Activated CD8-positive, alpha-beta T cell treated with anti-CD3 and anti-CD28 coated beads, Interleukin-2, amount 10 ng/mL, durations not matched to agents 7 days and 5 days (primary cell): ENCODE measurements at regions of chr6 and their contacts with region 1.

Region 1: GRCh38 chr6:35522660-35523658 is 10.3 kb upstream of the TULP1 start:
- DNase-seq: peak; percentile 83
- ATAC-seq: peak; percentile 95
- H3K4me3 Mint-ChIP-seq: peak overlapping the region; percentile 53
- H3K27ac Mint-ChIP-seq: peak overlapping the region; percentile 87
- H3K4me1 Mint-ChIP-seq: peaks cover 33% of the 10 kb centered on the region
- H3K27me3 Mint-ChIP-seq: peaks cover 6% of the 10 kb centered on the region

Region 2: GRCh38 chr6:35461244-35461643 is 61.7 kb before region 1 on chr6:
- CTCF ChIA-PET with region 1: no interaction called
- POLR2A ChIA-PET with region 1: no interaction called
- DNase-seq: no peak
- ATAC-seq: no peak
- H3K4me3 Mint-ChIP-seq: no peak overlapping the region
- H3K27ac Mint-ChIP-seq: no peak overlapping the region
- H3K4me1 Mint-ChIP-seq: peaks cover 3% of the 10 kb centered on the region
- H3K27me3 Mint-ChIP-seq: no peaks in the 10 kb centered on the region

Region 3: DNA sequence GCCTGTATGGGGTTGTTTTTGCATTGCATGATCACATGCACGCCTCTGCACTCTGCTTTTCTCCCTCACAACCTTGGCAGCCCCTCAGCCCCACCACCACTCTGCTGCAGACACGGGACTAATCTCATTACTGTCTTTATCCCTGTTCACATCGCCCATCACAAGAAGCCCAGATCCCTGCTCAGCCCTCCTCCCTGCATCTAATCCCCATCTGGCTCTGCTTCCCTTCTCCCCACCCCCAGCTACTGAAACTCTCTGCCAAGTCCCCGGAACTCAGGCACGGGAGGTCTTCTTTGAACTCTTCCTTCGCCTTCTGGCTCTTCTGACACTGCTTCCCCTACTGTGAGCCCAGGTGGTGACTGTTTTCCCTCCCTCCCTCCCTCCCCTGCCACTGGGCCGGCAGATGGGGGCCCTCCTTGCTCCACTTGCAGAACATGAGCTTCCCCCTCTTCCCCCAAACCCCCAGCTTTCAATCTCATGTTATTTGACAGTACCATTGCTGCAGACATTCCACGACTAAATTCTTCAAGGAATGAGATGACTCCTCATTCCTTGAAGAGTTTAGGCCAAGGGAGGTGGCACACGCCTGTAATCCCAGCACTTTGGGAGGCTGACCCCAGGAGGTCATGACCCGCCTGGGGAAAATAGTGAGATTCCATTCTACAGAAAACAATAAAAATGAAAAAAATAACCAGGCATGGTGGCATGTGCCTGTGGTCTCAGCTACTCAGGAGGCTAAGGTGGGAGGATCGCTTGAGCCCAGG is 11.6 kb after region 1 on chr6:
- CTCF ChIA-PET with region 1: interaction called, 19 read pairs
- POLR2A ChIA-PET with region 1: interaction called, 3 read pairs
- DNase-seq: no peak
- ATAC-seq: no peak
- H3K4me3 Mint-ChIP-seq: no peak overlapping the region
- H3K27ac Mint-ChIP-seq: no peak overlapping the region
- H3K4me1 Mint-ChIP-seq: peaks cover 10% of the 10 kb centered on the region
- H3K27me3 Mint-ChIP-seq: peaks cover 16% of the 10 kb centered on the region

Region 4: DNA sequence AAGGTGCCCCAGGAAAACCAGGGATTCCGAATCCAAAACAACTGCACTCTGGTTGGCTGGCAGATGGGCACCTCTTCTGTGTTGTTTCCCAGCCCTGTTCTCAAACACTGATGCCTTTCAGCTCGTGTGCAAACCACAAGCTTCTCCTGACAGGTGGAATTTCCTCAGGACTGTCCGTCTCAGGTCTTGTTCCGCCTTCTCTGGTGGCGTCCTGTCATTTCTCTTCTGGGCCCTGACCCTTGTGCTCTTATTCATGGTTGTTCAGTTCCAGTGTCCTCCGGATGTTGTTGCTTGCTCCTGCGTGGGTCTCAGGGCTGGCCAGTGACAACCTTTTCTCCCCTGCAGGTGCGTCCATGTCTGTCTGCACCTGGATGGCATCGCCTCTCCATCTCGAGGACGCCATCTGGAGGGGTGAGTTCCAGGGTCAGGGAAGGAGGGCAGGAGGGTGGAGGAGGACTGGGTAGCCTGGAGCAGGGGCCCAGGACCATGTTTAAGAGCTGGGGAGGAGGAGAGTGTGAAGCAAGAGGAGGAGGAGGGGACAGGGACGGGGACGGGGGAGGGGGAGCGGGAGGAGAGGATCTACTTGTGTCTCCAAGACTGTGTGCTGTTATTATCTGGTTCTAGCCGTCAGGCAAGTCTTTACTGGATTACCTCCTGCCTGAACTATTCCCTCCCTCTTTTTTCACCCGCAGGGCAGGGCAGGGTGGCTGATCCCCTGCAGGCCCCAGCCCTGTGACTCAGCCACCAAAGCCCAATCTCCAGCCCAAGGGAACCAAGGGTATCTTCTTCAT is 21.8 kb after region 1 on chr6:
- CTCF ChIA-PET with region 1: interaction called, 17 read pairs
- POLR2A ChIA-PET with region 1: no interaction called
- DNase-seq: no peak
- ATAC-seq: no peak
- H3K4me3 Mint-ChIP-seq: no peak overlapping the region
- H3K27ac Mint-ChIP-seq: no peak overlapping the region
- H3K4me1 Mint-ChIP-seq: peaks cover 4% of the 10 kb centered on the region
- H3K27me3 Mint-ChIP-seq: peaks cover 12% of the 10 kb centered on the region

Region 5: DNA sequence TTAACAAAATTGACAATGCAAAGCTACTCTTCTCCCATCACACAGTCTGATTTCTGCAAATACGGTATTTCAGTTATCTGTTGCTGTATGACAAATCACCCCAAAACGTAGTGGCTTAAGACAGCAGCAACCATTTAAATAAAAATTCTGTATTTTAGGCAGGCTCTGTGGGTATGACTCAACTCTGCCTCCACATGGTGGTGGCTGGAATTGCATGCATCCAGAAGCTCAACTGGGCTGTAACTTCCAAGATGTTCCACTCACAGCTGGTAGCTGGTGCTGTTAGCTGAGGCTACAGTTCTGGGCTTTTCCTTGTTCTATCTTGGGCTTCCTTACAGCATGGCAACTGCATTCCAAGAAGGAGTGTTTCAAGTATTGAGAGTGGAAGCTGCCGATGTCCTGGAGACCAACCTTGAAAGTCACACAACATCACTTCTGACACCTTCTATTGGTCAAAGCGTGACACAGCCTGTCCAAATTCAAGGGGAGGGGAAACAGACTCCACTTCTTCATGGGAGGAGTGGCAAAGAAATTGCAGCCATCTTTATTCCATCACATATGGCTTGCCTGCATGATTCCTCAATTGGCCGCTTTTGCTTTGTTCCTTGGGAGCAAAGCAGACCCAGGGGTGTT is 29.4 kb after region 1 on chr6:
- CTCF ChIA-PET with region 1: interaction called, 55 read pairs
- POLR2A ChIA-PET with region 1: interaction called, 8 read pairs
- DNase-seq: peak; percentile 78
- ATAC-seq: peak; percentile 64
- H3K4me3 Mint-ChIP-seq: no peak overlapping the region
- H3K27ac Mint-ChIP-seq: no peak overlapping the region
- H3K4me1 Mint-ChIP-seq: peaks cover 8% of the 10 kb centered on the region
- H3K27me3 Mint-ChIP-seq: peaks cover 14% of the 10 kb centered on the region

Region 6: GRCh38 chr6:35569011-35569461 is 46.1 kb after region 1 on chr6:
- CTCF ChIA-PET with region 1: interaction called, 16 read pairs
- POLR2A ChIA-PET with region 1: no interaction called
- DNase-seq: peak; percentile 50
- ATAC-seq: peak; percentile 71
- H3K4me3 Mint-ChIP-seq: no peak overlapping the region
- H3K27ac Mint-ChIP-seq: no peak overlapping the region
- H3K4me1 Mint-ChIP-seq: peaks cover 3% of the 10 kb centered on the region
- H3K27me3 Mint-ChIP-seq: peaks cover 14% of the 10 kb centered on the region

Region 7: GRCh38 chr6:35583893-35584688 is 61.1 kb after region 1 on chr6:
- CTCF ChIA-PET with region 1: interaction called, 12 read pairs
- POLR2A ChIA-PET with region 1: no interaction called
- DNase-seq: peak; percentile 87
- ATAC-seq: peak; percentile 78
- H3K4me3 Mint-ChIP-seq: no peak overlapping the region
- H3K27ac Mint-ChIP-seq: no peak overlapping the region
- H3K4me1 Mint-ChIP-seq: peaks cover 18% of the 10 kb centered on the region
- H3K27me3 Mint-ChIP-seq: no peaks in the 10 kb centered on the region

Region 8: GRCh38 chr6:35706468-35706867 is 183.5 kb after region 1 on chr6:
- CTCF ChIA-PET with region 1: no interaction called
- POLR2A ChIA-PET with region 1: no interaction called
- DNase-seq: no peak
- ATAC-seq: no peak
- H3K4me3 Mint-ChIP-seq: no peak overlapping the region
- H3K27ac Mint-ChIP-seq: no peak overlapping the region
- H3K4me1 Mint-ChIP-seq: peaks cover 19% of the 10 kb centered on the region
- H3K27me3 Mint-ChIP-seq: no peaks in the 10 kb centered on the region